Heart right ventricle (tissue), 16 donors: ENCODE measurements at regions of chr18 and their contacts with region 1.

Region 1: GRCh38 chr18:75896865-75897264 is 469.4 kb upstream of the SMIM21 start:
- DNase-seq: no peak
- ATAC-seq: no peak
- H3K4me3 ChIP-seq: no peak overlapping the region
- H3K27ac ChIP-seq: no peak overlapping the region
- H3K4me1 ChIP-seq: no peaks in the 10 kb centered on the region
- H3K27me3 ChIP-seq: peaks cover 0 to 3% (median 0%) of the 10 kb centered on the region in 7 donors
- CTCF ChIP-seq: no peak

Region 2: DNA sequence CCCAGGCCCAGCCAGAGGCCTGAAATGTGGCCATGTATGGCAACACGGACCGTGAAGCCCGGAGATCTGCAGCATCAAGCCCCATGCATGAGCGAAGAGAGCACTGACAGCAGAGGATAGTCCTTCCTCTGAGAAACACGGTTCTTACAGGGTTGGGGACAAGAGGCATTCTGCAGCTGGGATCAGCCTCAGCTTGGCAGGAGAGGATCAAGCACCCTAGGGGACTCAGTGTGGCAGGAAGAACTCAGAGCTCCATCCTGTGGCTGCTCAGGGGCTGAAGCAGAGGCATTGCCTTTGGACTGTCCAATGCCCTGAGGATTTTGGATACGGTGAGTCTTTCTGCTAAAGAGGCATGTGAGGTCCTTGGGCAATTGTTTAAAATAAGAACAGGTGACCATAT is 229.5 kb after region 1 on chr18:
- intact Hi-C with region 1: loop called in 1 of 10 experiments (anchors 10 kb)
- DNase-seq: peak in 1 of 2 donors; percentile 10
- ATAC-seq: peak; percentile 52 to 85 (median 68)
- H3K4me3 ChIP-seq: no peak overlapping the region
- H3K27ac ChIP-seq: no peak overlapping the region
- H3K4me1 ChIP-seq: no peaks in the 10 kb centered on the region
- H3K27me3 ChIP-seq: peaks cover 0 to 3% (median 0%) of the 10 kb centered on the region in 7 donors
- CTCF ChIP-seq: peak in 7 of 9 donors; percentile 20 to 52 (median 28)

Region 3: DNA sequence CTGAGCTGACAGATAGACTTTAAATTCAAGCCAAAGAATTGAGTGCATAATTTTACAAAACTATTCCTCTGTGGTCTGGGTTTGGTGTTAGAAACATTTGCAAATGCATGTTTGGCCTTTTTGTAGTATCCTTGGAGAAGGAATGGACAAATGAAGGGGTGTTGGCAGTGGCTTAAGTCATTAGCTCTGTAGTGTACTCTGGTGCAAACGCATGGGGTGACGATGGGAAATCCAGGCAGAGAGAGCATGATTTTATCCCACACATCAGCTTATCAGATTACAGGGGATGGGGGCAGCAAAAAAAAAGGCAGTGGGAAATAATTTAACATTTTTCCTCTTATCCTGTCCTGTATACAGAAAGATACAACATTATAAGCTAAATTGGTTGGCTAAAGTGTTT is 277.6 kb after region 1 on chr18:
- intact Hi-C with region 1: no loop called
- DNase-seq: no peak
- ATAC-seq: no peak
- H3K4me3 ChIP-seq: no peak overlapping the region
- H3K27ac ChIP-seq: no peak overlapping the region
- H3K4me1 ChIP-seq: no peaks in the 10 kb centered on the region
- H3K27me3 ChIP-seq: no peaks in the 10 kb centered on the region
- CTCF ChIP-seq: no peak

Region 4: GRCh38 chr18:76252880-76253279 is 356.0 kb after region 1 on chr18:
- intact Hi-C with region 1: loop called in 1 of 10 experiments (anchors 10 kb)
- DNase-seq: no peak
- ATAC-seq: no peak
- H3K4me3 ChIP-seq: no peak overlapping the region
- H3K27ac ChIP-seq: no peak overlapping the region
- H3K4me1 ChIP-seq: peaks cover 0 to 3% (median 0%) of the 10 kb centered on the region in 9 donors
- H3K27me3 ChIP-seq: peaks cover 0 to 20% (median 5%) of the 10 kb centered on the region in 7 donors
- CTCF ChIP-seq: peak in 7 of 9 donors; percentile 14 to 45 (median 41)